ENCODE measurements at regions of chr7 and their contacts with region 1.

Region 1: GRCh38 chr7:44477063-44477830 is 13.2 kb downstream of the NUDCD3 start:
- DNase-seq: peak; percentile 68 to 77
- H3K4me3 ChIP-seq: no peak overlapping the region
- H3K4me3 Mint-ChIP-seq: no peak overlapping the region
- H3K27ac Mint-ChIP-seq: no peak overlapping the region
- H3K4me1 ChIP-seq: peaks cover 16% of the 10 kb centered on the region
- H3K4me1 Mint-ChIP-seq: peaks cover 38% of the 10 kb centered on the region
- H3K27me3 ChIP-seq: no peaks in the 10 kb centered on the region
- H3K27me3 Mint-ChIP-seq: no peaks in the 10 kb centered on the region
- CTCF ChIP-seq: peak; percentile 91 to 92

Region 2: DNA sequence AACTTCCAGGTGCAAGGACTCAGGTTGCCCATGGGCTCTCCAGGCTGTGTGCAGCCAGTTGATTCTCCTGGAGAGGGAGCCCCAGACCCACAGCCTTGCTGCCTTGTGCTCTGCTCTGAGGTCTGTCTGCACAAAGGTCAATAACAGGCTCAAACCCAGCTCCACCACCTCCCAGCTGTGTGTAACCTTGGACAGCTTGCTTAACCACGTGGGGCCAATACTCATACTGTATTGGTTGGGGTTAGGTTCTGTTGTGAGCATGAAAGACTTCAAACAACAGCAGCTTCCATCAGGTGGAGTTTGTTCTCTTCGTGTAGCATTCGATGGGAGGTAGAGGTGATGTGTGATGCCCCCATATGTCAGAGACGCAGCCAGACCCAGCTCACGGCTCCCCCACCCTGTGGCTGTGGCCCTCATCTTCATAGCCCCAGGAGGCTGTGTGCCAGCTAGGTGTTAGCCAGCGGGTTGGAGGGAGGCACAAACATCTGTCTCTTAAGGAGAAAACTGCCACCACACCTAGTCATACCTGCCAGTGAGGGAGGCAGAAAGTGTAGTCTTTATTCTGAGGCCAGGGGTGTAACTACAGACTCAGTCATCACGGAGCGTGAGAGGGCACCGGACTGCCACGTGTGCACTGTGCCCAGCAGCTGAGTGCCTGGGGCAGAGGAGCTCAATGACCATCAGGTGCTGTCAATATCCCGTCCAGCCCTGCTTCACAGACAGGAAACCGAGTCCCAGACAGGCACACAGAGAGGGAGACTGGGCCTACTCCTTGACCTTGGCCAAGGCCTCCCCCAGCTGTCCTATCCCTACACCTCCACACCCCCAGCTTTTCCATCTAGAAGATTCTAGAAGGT is 345.8 kb before region 1 on chr7:
- CTCF ChIA-PET with region 1: no interaction called
- POLR2A ChIA-PET with region 1: no interaction called
- intact Hi-C with region 1: loop called (anchors 10 kb)
- DNase-seq: peak; percentile 83 to 85
- H3K4me3 ChIP-seq: no peak overlapping the region
- H3K4me3 Mint-ChIP-seq: no peak overlapping the region
- H3K27ac Mint-ChIP-seq: no peak overlapping the region
- H3K4me1 ChIP-seq: peaks cover 15% of the 10 kb centered on the region
- H3K4me1 Mint-ChIP-seq: peaks cover 8% of the 10 kb centered on the region
- H3K27me3 ChIP-seq: no peaks in the 10 kb centered on the region
- H3K27me3 Mint-ChIP-seq: no peaks in the 10 kb centered on the region
- CTCF ChIP-seq: peak; percentile 42 to 83

Region 3: GRCh38 chr7:44375236-44375699 is 102.0 kb before region 1 on chr7:
- CTCF ChIA-PET with region 1: no interaction called
- POLR2A ChIA-PET with region 1: no interaction called
- intact Hi-C with region 1: loop called (anchors 1 kb)
- DNase-seq: peak in 1 of 2 experiments; percentile 62
- H3K4me3 ChIP-seq: no peak overlapping the region
- H3K4me3 Mint-ChIP-seq: no peak overlapping the region
- H3K27ac Mint-ChIP-seq: no peak overlapping the region
- H3K4me1 ChIP-seq: no peaks in the 10 kb centered on the region
- H3K4me1 Mint-ChIP-seq: no peaks in the 10 kb centered on the region
- H3K27me3 ChIP-seq: no peaks in the 10 kb centered on the region
- H3K27me3 Mint-ChIP-seq: peaks cover 6% of the 10 kb centered on the region
- CTCF ChIP-seq: peak; percentile 27 to 60

Region 4: GRCh38 chr7:44431091-44431608 is 46.1 kb before region 1 on chr7:
- CTCF ChIA-PET with region 1: no interaction called
- POLR2A ChIA-PET with region 1: no interaction called
- intact Hi-C with region 1: loop called (anchors 2 kb)
- DNase-seq: peak; percentile 39 to 54
- H3K4me3 ChIP-seq: no peak overlapping the region
- H3K4me3 Mint-ChIP-seq: no peak overlapping the region
- H3K27ac Mint-ChIP-seq: no peak overlapping the region
- H3K4me1 ChIP-seq: no peaks in the 10 kb centered on the region
- H3K4me1 Mint-ChIP-seq: no peaks in the 10 kb centered on the region
- H3K27me3 ChIP-seq: no peaks in the 10 kb centered on the region
- H3K27me3 Mint-ChIP-seq: no peaks in the 10 kb centered on the region
- CTCF ChIP-seq: peak; percentile 25 to 49

Measured in Caco-2 (cell line).